Breast epithelium (tissue), 4 donors: ENCODE measurements at regions of chr1 and their contacts with region 1.

Region 1: DNA sequence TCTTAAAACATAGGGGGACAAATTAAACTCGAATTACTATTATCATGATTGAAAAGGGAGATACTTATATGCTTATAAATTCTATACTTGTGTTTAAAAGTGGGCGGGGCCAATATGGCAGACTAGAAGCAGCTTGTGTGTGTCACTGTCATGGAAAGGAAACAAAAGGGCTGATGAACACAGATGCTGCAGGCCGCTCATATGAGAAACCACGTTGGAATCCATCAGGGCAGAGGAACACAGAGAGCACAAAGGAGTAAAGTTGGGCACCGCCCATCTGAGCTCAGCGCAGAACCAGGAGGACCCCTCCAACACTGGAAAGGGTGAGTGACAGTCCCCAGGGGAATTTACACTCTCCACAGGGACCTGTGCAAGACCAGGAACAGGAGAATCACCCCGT is 107.0 kb downstream of the SLC5A9 start:
- DNase-seq: no peak
- H3K4me3 ChIP-seq: no peak overlapping the region
- H3K27ac ChIP-seq: no peak overlapping the region
- H3K4me1 ChIP-seq: no peaks in the 10 kb centered on the region
- H3K27me3 ChIP-seq: no peaks in the 10 kb centered on the region
- CTCF ChIP-seq: no peak
- POLR2A ChIP-seq: no peak

Region 2: GRCh38 chr1:48263041-48263440 is 66.4 kb before region 1 on chr1:
- intact Hi-C with region 1: loop called (anchors 10 kb)
- DNase-seq: no peak
- H3K4me3 ChIP-seq: no peak overlapping the region
- H3K27ac ChIP-seq: no peak overlapping the region
- H3K4me1 ChIP-seq: no peaks in the 10 kb centered on the region
- H3K27me3 ChIP-seq: no peaks in the 10 kb centered on the region
- CTCF ChIP-seq: no peak
- POLR2A ChIP-seq: no peak

Region 3: DNA sequence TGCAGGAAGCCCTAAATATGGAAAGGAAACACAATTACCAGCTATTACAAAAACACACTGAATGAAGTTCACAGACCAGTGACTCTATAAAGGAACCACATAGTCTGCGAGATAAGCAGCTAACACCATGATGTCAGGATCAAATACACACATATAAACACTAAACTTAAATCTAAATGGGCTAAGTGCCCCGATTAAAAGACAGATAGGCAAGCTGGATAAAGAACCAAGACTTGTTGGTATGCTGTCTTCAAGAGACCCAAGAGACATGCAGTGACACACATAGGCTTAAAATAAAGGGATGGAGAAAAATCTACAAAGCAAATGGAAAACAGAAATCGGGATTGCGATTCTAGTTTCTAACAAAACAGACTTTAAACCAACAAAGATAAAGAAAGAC is 14.9 kb after region 1 on chr1:
- intact Hi-C with region 1: no loop called
- DNase-seq: no peak
- H3K4me3 ChIP-seq: no peak overlapping the region
- H3K27ac ChIP-seq: no peak overlapping the region
- H3K4me1 ChIP-seq: no peaks in the 10 kb centered on the region
- H3K27me3 ChIP-seq: no peaks in the 10 kb centered on the region
- CTCF ChIP-seq: no peak
- POLR2A ChIP-seq: no peak

Region 4: GRCh38 chr1:48469616-48470480 is 140.4 kb after region 1 on chr1:
- intact Hi-C with region 1: no loop called
- DNase-seq: peak in 1 of 2 donors; percentile 63
- H3K4me3 ChIP-seq: peak overlapping the region; percentile 55 to 87 (median 83)
- H3K27ac ChIP-seq: peak overlapping the region; percentile 97
- H3K4me1 ChIP-seq: no peaks in the 10 kb centered on the region
- H3K27me3 ChIP-seq: no peaks in the 10 kb centered on the region
- CTCF ChIP-seq: no peak
- POLR2A ChIP-seq: no peak